ENCODE measurements at regions of chr22 and their contacts with region 1.

Region 1: GRCh38 chr22:39170825-39171622 is 18.5 kb upstream of the CBX7 start:
- DNase-seq: peak; percentile 87
- H3K4me3 ChIP-seq: peak overlapping the region in 1 of 4 donors; percentile 13
- H3K27ac ChIP-seq: no peak overlapping the region
- H3K4me1 ChIP-seq: peaks cover 22 to 35% (median 25%) of the 10 kb centered on the region in 4 donors
- H3K27me3 ChIP-seq: peaks cover 1% of the 10 kb centered on the region
- CTCF ChIP-seq: peak; percentile 95 to 96 (median 96)
- EP300 ChIP-seq: no peak
- POLR2A ChIP-seq: no peak

Region 2: GRCh38 chr22:39098026-39098425 is 73.0 kb before region 1 on chr22:
- in situ Hi-C with region 1: no loop called
- intact Hi-C with region 1: no loop called
- DNase-seq: no peak
- H3K4me3 ChIP-seq: no peak overlapping the region
- H3K27ac ChIP-seq: peak overlapping the region in 1 of 4 donors; percentile 7
- H3K4me1 ChIP-seq: peaks cover 0 to 16% (median 4%) of the 10 kb centered on the region in 4 donors
- H3K27me3 ChIP-seq: no peaks in the 10 kb centered on the region
- CTCF ChIP-seq: no peak
- EP300 ChIP-seq: no peak
- POLR2A ChIP-seq: no peak

Region 3: DNA sequence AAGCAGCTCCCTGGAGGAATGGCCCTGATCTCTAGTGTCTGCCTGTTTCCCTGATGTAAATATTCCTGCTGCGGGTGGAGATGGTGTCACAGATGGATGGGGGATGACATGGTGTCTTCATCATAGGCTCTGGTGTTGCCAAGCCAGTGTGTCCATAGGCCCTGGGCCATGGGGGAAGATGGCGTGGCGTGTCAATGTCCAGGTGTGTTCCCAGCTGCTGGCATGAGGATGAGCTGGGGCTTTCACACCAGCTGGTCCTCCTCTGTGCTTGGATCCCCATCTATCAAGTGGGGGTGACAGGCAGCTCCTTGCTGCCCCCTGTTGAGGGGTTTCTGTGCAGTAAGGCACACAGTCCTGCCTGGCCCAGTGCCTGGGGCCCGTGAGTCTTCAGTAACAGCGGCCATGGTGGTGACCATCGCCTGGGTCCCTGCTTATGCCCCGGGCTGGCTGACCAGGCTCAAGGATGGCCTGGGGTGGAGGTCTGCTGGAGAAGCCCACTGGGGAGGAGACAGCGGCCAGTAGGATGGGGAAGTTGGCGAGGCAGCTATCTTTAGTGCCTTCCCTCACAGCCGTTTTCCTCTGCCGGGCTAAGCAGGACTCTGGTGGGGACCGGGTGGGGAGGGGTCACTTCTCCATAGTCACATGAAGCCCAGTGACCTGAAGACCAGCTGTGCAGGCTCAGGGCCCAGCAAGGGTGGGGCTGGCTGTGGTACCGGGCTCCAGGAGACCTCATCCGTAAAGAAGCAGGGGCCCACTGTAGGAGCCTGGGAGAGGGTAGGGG is 135.7 kb after region 1 on chr22:
- in situ Hi-C with region 1: loop called (anchors 5 to 10 kb)
- intact Hi-C with region 1: no loop called
- DNase-seq: peak; percentile 45
- H3K4me3 ChIP-seq: no peak overlapping the region
- H3K27ac ChIP-seq: no peak overlapping the region
- H3K4me1 ChIP-seq: peaks cover 0 to 7% (median 4%) of the 10 kb centered on the region in 4 donors
- H3K27me3 ChIP-seq: no peaks in the 10 kb centered on the region
- CTCF ChIP-seq: peak in 2 of 5 experiments; percentile 13
- EP300 ChIP-seq: no peak
- POLR2A ChIP-seq: no peak

Region 4: DNA sequence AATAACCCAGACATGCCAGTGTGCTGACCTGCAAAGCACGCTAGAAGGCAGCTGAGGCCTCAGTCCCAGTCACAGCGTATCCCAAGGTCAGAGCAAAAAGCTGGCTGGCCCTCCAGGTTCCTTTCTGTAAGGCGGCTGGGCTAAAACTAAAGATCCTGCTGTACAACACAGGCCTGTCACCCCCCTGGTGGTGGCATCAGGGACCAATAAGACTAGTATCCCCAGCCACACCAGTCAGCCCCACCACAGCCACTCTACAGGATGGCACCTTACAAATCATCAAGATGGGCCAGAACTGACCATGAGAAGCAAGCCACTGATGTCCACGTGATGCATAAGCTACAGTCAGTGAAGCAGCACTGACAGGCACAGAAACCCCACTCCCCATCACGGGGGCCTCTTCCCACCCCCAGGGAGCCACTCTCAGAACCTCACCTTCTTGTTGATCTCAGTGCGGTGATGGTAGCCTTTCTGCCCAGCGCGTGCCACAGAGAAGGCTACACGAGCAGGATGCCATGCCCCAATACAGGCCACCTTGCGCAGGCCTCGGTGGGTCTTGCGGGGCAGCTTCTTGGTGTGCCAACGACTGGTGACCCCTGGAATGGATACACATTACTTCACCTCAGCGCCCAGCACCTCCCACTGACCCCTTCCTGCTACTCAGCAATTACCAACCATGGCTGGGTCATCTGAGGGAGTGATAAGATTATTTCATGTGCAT is 143.4 kb after region 1 on chr22:
- in situ Hi-C with region 1: loop called (anchors 5 to 10 kb)
- intact Hi-C with region 1: loop called (anchors 2 kb)
- DNase-seq: no peak
- H3K4me3 ChIP-seq: no peak overlapping the region
- H3K27ac ChIP-seq: no peak overlapping the region
- H3K4me1 ChIP-seq: peaks cover 33 to 38% (median 36%) of the 10 kb centered on the region in 4 donors
- H3K27me3 ChIP-seq: no peaks in the 10 kb centered on the region
- CTCF ChIP-seq: peak in 1 of 5 experiments; percentile 13
- EP300 ChIP-seq: no peak
- POLR2A ChIP-seq: no peak

Region 5: GRCh38 chr22:39319270-39320022 is 148.4 kb after region 1 on chr22 and contains the start of gene RPL3:
- in situ Hi-C with region 1: loop called in 3 of 4 experiments (anchors 5 to 10 kb)
- intact Hi-C with region 1: loop called (anchors 2 kb)
- DNase-seq: peak; percentile 96
- H3K4me3 ChIP-seq: peak within 1 kb of the TSS; percentile 60 to 82 (median 74)
- H3K27ac ChIP-seq: peak within 1 kb of the TSS; percentile 96 to 99 (median 98)
- H3K4me1 ChIP-seq: peaks cover 33 to 42% (median 37%) of the 10 kb centered on the region in 4 donors
- H3K27me3 ChIP-seq: no peaks in the 10 kb centered on the region
- CTCF ChIP-seq: peak in 4 of 5 experiments; percentile 6 to 52 (median 16)
- EP300 ChIP-seq: peak; percentile 18
- POLR2A ChIP-seq: peak; percentile 98
- total RNA-seq, gene RPL3: 909 to 2,069 (median 1,420) TPM

Region 6: GRCh38 chr22:39520054-39520891 is 349.2 kb after region 1 on chr22 and contains the start of gene ATF4:
- in situ Hi-C with region 1: loop called in 1 of 4 experiments (anchors 25 kb)
- intact Hi-C with region 1: loop called (anchors 10 kb)
- DNase-seq: peak; percentile 98
- H3K4me3 ChIP-seq: peak within 1 kb of the TSS; percentile 93 to 96 (median 94)
- H3K27ac ChIP-seq: peak within 1 kb of the TSS; percentile 96 to 100 (median 100)
- H3K4me1 ChIP-seq: peaks cover 22 to 50% (median 41%) of the 10 kb centered on the region in 4 donors
- H3K27me3 ChIP-seq: no peaks in the 10 kb centered on the region
- CTCF ChIP-seq: peak in 1 of 5 experiments; percentile 10
- EP300 ChIP-seq: no peak
- POLR2A ChIP-seq: peak; percentile 100
- total RNA-seq, gene ATF4: 262 to 566 (median 339) TPM